Gastrocnemius medialis (tissue), 4 donors: ENCODE measurements at regions of chr20 and their contacts with region 1.

Region 1: DNA sequence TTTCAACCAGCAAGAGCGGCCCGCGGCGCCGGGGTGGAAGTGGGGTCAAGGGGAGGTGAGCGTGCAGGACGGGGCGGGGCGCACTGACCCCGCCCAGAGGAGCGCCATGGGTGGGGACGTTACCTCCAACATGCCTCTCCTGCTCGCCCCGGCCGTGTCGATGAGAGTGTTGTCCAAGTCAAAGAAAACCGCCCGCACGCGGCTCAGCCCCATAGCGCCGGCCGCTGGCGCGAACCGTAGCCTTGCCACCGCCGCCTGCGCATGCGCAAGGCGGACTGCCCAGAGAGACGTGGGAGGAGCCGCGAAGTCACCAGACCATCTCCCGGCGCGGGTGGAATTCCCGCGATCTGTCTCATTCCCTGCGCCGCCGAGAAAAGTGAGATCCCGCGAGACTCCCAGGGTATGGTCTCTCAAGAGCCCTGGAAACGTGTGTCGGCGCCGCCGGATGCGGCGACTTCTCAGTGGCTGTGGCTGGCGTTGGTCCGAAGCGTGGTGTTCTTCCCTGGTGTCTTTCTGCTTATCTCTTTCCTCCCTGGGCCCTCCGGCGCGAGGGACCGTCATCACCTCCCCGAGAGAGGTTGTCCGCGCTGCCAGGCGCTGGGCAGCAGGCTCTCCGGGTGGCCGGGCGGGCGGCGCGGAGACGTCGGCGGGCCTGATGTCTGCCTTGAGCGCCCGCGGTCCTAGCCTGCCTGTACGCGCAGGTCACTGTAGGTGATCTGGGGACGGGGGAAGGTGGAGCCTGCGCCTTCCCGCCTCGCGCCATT is at the start of gene NANP:
- DNase-seq: peak; percentile 91 to 95
- ATAC-seq: peak; percentile 95 to 96
- H3K4me3 ChIP-seq: peak within 1 kb of the TSS; percentile 72 to 95 (median 85)
- H3K27ac ChIP-seq: peak within 1 kb of the TSS; percentile 87 to 93 (median 92)
- H3K4me1 ChIP-seq: peaks cover 10 to 11% of the 10 kb centered on the region in 2 donors
- H3K27me3 ChIP-seq: no peaks in the 10 kb centered on the region
- CTCF ChIP-seq: peak in 1 of 5 experiments; percentile 3
- POLR2A ChIP-seq: peak; percentile 75 to 79
- total RNA-seq, gene NANP: 1.5 to 3.6 (median 2.6) TPM

Region 2: DNA sequence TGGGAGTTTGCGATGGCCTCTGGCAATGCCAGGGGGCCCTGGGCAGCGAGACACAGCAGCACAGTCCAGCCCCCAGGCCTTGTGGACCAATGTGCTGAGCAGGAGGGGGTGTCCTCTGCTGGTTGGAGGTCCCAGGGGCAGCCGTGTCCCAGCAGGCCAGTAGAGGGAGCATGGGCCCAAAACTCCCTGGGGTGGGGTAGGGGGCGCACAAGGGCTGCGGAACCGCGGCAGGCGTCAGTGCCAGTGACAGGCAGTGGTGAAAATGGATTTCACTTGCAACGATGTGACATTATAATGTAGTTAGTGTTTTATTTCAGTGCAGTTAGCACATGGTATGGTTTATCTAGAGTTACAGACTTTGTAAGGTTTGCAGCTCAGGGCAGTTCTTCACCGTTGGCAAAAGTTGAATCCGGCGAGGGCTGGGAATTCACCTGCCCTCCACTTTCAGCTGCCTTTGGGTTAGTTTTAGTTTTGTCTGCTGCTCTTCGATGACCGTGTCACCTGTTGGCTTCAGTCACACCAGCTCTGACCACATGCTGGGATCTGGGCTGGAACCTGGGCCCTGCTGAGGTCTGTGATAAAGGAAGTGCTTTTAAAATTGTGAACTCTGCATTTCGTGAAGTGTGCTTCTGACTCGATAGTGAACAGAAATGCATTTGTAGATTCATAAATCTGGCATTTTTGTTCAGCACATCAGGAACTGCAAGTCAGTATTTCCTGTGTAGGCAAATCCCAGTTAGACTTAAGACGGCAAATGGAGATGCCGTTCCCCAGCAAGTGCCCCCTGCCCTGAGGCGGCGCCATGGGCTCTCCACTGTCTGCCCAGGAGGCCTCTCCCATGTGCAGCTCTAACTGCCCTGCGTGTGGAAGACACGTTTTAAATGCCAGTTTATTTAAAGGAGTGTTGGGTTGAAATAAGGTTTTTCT is 329.2 kb before region 1 on chr20:
- in situ Hi-C with region 1: no loop called
- intact Hi-C with region 1: no loop called
- DNase-seq: peak in 1 of 2 donors; percentile 48
- ATAC-seq: peak; percentile 19 to 28
- H3K4me3 ChIP-seq: no peak overlapping the region
- H3K27ac ChIP-seq: peak overlapping the region; percentile 46 to 85 (median 65)
- H3K4me1 ChIP-seq: peaks cover 26 to 32% of the 10 kb centered on the region in 2 donors
- H3K27me3 ChIP-seq: no peaks in the 10 kb centered on the region
- CTCF ChIP-seq: peak; percentile 51 to 80 (median 55)
- POLR2A ChIP-seq: no peak

Region 3: GRCh38 chr20:25496968-25497640 is 126.8 kb before region 1 on chr20:
- in situ Hi-C with region 1: no loop called
- intact Hi-C with region 1: no loop called
- DNase-seq: no peak
- ATAC-seq: no peak
- H3K4me3 ChIP-seq: no peak overlapping the region
- H3K27ac ChIP-seq: no peak overlapping the region
- H3K4me1 ChIP-seq: no peaks in the 10 kb centered on the region
- H3K27me3 ChIP-seq: no peaks in the 10 kb centered on the region
- CTCF ChIP-seq: no peak
- POLR2A ChIP-seq: no peak

Region 4: DNA sequence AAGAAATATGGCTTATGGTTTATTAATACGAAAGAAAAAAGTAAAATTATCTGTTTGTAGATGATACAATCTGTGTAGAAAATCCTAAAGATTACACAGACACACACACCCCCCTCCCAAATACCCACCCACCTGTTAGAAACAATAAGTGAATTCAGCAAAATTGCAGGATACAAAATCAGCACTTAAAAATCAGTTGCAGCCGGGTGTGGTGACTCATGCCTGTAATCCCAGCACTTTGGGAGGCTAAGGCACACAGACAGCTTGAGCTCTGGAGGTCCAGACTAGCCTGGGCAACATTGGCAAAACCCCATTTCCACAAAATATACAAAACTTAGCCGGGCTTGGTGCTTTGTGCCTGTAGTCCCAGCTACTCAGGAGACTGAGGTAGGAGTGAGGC is 80.8 kb before region 1 on chr20:
- in situ Hi-C with region 1: no loop called
- intact Hi-C with region 1: no loop called
- DNase-seq: no peak
- ATAC-seq: no peak
- H3K4me3 ChIP-seq: no peak overlapping the region
- H3K27ac ChIP-seq: no peak overlapping the region
- H3K4me1 ChIP-seq: peaks cover 0 to 8% of the 10 kb centered on the region in 2 donors
- H3K27me3 ChIP-seq: no peaks in the 10 kb centered on the region
- CTCF ChIP-seq: no peak
- POLR2A ChIP-seq: no peak

Region 5: GRCh38 chr20:25592135-25592852 is 31.6 kb before region 1 on chr20:
- in situ Hi-C with region 1: no loop called
- intact Hi-C with region 1: no loop called
- DNase-seq: no peak
- ATAC-seq: no peak
- H3K4me3 ChIP-seq: no peak overlapping the region
- H3K27ac ChIP-seq: no peak overlapping the region
- H3K4me1 ChIP-seq: no peaks in the 10 kb centered on the region
- H3K27me3 ChIP-seq: no peaks in the 10 kb centered on the region
- CTCF ChIP-seq: no peak
- POLR2A ChIP-seq: no peak

Region 6: DNA sequence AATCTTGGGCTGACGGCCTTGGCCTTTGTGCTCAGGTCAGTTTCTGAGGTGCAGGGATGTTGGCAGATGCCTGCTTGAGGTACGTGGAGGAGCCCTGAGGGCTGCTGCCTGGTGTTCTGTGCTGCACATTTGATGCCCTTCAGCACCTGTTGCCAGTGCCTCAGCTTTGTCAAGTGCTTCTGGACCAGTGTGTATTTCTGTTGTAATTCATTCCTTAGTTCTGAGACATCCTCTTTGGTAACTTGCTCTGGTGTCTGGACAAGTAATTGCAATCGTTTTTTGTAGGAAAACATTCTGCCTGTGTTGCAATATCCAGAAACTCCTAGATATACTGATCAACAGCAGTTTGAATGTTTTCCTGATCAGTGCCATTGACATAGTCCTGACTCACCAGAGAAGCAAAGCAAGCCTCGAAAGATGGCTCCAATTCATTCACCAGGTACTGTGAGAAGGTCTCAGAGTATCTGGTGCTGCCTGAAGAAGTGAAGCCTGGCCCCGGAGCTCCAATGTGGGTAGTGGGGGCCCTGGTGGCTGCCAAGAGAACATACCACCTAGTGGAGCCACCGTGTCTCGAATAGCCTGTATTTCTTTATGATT is 46.0 kb after region 1 on chr20:
- in situ Hi-C with region 1: loop called in 1 of 4 experiments (anchors 10 kb)
- intact Hi-C with region 1: no loop called
- DNase-seq: no peak
- ATAC-seq: peak; percentile 46 to 65
- H3K4me3 ChIP-seq: no peak overlapping the region
- H3K27ac ChIP-seq: no peak overlapping the region
- H3K4me1 ChIP-seq: no peaks in the 10 kb centered on the region
- H3K27me3 ChIP-seq: no peaks in the 10 kb centered on the region
- CTCF ChIP-seq: no peak
- POLR2A ChIP-seq: no peak

Region 7: GRCh38 chr20:25865380-25866118 is 241.6 kb after region 1 on chr20:
- in situ Hi-C with region 1: loop called in 2 of 4 experiments (anchors 25 kb)
- intact Hi-C with region 1: loop called (anchors 5 kb)
- DNase-seq: peak; percentile 40 to 53
- ATAC-seq: no peak
- H3K4me3 ChIP-seq: peak overlapping the region; percentile 48 to 68 (median 53)
- H3K27ac ChIP-seq: no peak overlapping the region
- H3K4me1 ChIP-seq: peaks cover 20 to 39% of the 10 kb centered on the region in 2 donors
- H3K27me3 ChIP-seq: no peaks in the 10 kb centered on the region
- CTCF ChIP-seq: no peak
- POLR2A ChIP-seq: no peak